Activated T-helper 2 cell treated with anti-CD3 and anti-CD28 coated beads, Interferon-gamma antibody, Interleukin-2, Interleukin-4, amounts not matched to agents 10 μg/mL and 5 μg/mL and 100 μg/mL, durations not matched to agents 14 hours and 24 hours and 36 hours (primary cell): ENCODE measurements at regions of chr15 and their contacts with region 1.

Region 1: DNA sequence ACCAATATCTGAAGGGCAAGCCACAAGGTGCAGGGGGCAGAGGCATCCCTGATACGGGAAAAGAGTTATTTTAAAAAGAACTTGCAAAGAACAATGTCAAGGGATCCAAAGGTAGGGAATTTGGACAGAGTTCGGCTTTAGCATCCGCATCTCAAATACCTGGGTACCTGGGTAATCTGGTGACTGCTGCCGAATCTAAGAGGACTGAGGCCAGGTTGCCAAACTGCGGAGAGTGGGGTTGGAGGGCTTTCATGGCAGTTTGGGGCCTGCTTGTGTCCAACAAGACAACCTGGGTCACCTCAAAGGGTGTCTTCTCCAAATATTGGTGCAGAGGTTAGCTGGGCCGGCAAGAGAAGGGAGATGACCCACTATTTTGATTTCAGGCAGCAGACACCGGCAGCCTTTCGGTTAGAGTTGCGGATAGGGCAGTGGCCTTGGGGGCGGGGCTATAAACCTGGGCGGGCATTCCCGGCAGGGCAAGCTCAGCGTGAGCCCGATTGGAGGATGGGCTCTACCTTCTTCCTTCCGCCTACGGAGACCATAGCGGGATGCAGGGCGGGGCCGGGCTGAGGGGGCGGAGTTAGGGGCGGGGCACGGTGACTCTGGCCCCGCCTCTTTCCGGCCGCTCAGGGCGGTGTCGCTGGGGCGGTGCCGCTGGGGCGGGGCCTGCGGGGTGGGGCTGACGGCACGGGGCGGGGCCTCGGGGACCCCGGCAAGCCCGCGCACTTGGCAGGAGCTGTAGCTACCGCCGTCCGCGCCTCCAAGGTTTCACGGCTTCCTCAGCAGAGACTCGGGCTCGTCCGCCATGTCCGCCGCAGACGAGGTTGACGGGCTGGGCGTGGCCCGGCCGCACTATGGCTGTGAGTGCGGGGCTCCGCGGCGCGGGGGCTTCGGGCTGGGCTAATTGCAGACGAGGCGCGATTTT is at the start of gene IQGAP1:
- DNase-seq: peak; percentile 96
- H3K4me3 Mint-ChIP-seq: peak within 1 kb of the TSS; percentile 93
- H3K27ac Mint-ChIP-seq: peak within 1 kb of the TSS; percentile 95
- H3K4me1 Mint-ChIP-seq: peaks cover 33% of the 10 kb centered on the region
- H3K27me3 Mint-ChIP-seq: no peaks in the 10 kb centered on the region
- total RNA-seq, gene IQGAP1: 186 and 196 TPM in 2 replicates

Region 2: GRCh38 chr15:90046911-90047392 is 340.8 kb before region 1 on chr15:
- intact Hi-C with region 1: no loop called
- DNase-seq: no peak
- H3K4me3 Mint-ChIP-seq: no peak overlapping the region
- H3K27ac Mint-ChIP-seq: peak overlapping the region; percentile 19
- H3K4me1 Mint-ChIP-seq: peaks cover 11% of the 10 kb centered on the region
- H3K27me3 Mint-ChIP-seq: no peaks in the 10 kb centered on the region

Region 3: DNA sequence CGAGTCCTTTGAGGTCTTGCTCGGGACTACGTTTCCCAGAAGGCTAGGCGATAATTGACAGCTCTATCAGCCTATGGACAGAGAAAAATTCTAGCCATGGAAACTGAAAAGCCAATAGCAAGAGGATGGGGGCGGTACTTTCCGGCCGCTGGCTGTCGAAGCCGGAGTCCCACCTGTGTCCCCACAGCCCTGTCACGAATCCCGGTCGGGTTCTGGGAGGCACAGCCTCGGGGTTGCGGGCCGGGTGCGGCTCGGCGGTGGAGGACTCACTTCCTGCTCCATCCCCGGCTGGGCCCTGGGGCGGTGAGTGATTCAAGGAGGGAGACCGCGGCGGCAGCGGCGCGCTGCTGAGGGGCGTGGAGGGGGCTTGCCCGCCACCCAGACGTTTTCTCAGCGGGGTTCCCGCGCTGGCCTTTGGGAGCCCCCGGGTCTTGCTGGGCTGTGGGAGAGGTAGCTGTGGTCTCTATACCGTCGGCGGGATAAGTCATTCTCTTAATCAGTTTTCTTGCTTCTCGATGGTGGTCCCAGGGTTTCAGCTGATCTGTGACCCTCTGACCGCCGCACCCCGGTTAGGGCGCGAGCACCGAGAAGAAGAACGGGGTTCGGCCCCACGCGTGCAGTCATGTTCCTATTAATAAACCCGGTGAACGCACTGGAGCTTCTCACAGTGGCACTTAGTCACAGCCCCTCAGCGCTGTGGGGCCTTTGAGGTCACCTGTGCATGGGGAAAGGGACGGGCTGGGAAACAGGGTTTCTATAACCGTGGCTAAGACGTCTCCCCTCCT is 35.5 kb before region 1 on chr15 and contains the start of gene ZNF774:
- intact Hi-C with region 1: loop called (anchors 1 kb)
- DNase-seq: peak; percentile 87
- H3K4me3 Mint-ChIP-seq: peak within 1 kb of the TSS; percentile 86
- H3K27ac Mint-ChIP-seq: peak within 1 kb of the TSS; percentile 85
- H3K4me1 Mint-ChIP-seq: peaks cover 11% of the 10 kb centered on the region
- H3K27me3 Mint-ChIP-seq: peaks cover 7% of the 10 kb centered on the region
- total RNA-seq, gene ZNF774: 2.7 and 3.6 TPM in 2 replicates

Region 4: GRCh38 chr15:90376789-90377188 is 11.0 kb before region 1 on chr15:
- intact Hi-C with region 1: loop called (anchors 1 kb)
- DNase-seq: peak; percentile 69
- H3K4me3 Mint-ChIP-seq: peak overlapping the region; percentile 23
- H3K27ac Mint-ChIP-seq: peak overlapping the region; percentile 96
- H3K4me1 Mint-ChIP-seq: peaks cover 31% of the 10 kb centered on the region
- H3K27me3 Mint-ChIP-seq: no peaks in the 10 kb centered on the region

Region 5: DNA sequence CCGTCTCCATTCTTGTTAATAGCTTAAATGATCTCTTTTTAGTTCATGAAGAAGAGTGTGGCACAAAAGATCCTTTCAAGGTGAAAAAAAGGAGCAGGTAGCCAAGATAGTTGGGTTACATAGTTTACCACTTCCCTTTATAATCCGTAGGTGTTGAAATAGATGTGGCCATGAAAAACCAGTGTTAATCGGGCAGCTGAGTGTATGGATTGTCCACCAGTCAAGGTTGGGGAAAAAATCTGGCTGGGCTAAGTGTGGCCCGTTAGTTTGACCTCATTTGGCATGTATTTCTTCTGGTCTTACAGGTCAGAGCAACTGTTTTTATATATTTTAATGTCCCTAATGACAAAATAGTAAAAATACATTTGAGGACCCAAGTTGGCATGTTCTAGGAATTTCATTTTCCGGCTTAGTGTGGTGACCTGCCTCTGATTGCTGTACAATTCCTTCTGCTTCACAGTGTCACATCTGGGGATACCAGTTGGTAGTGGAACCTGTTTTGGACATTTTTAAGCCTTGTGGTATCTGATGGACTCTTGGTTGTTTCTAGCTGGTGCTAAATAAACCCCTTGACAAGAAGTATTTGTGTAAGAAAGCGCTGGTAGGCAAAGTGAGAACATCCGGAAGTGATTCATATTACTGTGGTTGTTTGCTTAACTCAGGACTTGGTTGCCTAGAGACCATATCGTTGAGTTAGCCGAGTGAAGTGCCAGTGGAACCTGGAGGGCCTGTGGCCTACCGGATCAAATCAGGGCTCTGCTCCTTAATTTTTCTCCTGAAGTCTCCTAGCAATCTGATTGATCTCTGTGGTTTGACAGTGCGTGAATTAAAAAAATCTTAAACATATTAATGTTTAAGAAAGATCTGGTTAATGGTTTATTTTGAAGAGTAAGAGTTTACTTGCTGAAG is 12.9 kb after region 1 on chr15:
- intact Hi-C with region 1: loop called (anchors 2 kb)
- DNase-seq: peak; percentile 70
- H3K4me3 Mint-ChIP-seq: peak overlapping the region; percentile 68
- H3K27ac Mint-ChIP-seq: peak overlapping the region; percentile 93
- H3K4me1 Mint-ChIP-seq: peaks cover 54% of the 10 kb centered on the region
- H3K27me3 Mint-ChIP-seq: no peaks in the 10 kb centered on the region

Region 6: GRCh38 chr15:90436952-90437351 is 49.2 kb after region 1 on chr15:
- intact Hi-C with region 1: no loop called
- DNase-seq: no peak
- H3K4me3 Mint-ChIP-seq: no peak overlapping the region
- H3K27ac Mint-ChIP-seq: no peak overlapping the region
- H3K4me1 Mint-ChIP-seq: peaks cover 17% of the 10 kb centered on the region
- H3K27me3 Mint-ChIP-seq: no peaks in the 10 kb centered on the region